Mammary epithelial cell (primary cell): ENCODE measurements at regions of chr20 and their contacts with region 1.

Region 1: DNA sequence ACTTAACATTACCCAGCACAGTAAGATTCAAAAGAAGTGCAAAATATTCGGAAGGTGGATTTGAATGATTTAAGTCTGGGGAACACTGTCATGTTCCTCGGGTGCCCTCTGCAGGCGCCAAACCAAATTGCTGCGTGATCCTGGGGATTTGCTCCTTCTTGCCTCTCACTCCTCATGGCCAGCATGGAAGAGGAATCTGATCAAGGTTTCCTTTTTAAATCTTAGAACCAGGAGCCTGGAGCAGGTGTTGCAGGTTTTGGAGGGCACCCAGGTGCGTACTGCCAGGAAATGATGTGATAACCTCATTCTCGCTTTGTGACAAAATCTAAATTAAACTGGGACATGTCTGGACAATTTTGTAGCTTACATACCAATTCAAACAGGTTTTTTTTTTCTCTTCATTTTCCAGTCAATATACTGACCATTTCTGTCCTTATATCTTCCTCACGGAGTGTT is 8.1 kb upstream of the PFDN4 start:
- DNase-seq: peak; percentile 70
- H3K4me3 ChIP-seq: no peak overlapping the region
- H3K27ac ChIP-seq: no peak overlapping the region
- H3K4me1 ChIP-seq: peaks cover 17% of the 10 kb centered on the region
- H3K27me3 ChIP-seq: no peaks in the 10 kb centered on the region
- CTCF ChIP-seq: peak; percentile 92 to 97

Region 2: DNA sequence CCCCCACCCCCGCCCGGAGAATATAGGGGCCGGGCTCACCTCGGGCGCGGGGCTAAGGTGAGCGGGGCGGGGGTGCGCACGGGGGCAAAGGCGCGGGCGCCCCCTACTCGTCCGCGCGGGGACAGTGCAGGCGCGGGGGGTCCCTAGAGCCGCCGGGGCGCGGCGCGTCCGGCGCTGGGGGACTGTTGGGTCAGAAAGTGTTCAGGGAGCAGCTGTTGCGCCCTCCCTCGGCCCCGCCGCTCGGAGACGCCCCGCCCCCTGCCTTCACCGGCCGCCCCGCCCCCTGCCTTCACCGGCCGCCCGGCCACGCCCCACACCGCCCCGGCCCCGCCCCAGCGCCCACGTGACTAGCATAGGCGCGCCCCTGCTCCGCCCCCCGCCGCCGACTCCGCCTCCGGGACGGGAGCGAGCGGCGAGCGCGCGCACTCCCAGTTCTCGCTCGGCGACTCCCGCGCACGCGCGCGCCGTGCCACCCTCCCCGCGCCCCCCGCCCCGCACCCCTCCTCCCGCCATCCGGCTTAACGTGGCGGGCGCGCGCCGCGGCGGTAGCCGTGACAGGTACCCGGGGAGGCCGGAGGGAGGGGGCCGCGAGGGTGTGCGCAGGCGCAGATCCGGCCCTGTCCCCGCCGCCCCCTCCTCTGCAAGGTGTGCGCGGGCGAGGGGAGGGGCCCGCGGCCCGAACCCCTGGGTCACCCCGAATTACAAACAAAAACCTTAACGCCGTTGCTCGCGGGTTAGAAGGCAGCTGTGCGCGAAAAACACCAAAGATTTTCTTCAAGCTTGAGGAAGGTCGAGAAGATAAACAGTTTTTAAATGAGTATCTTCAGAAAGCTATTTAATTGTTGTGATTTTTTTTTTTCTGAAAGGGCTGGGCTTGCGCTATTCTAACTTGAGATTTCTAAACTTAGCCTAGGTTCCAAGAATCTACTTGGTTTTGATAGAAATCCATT is 605.4 kb before region 1 on chr20:
- CTCF ChIA-PET with region 1: no interaction called
- dilution Hi-C with region 1: no loop called
- in situ Hi-C with region 1: loop called in 1 of 2 experiments (anchors 25 kb)
- intact Hi-C with region 1: no loop called
- DNase-seq: peak; percentile 85
- H3K4me3 ChIP-seq: peak overlapping the region; percentile 67 to 85 (median 83)
- H3K27ac ChIP-seq: peak overlapping the region; percentile 81
- H3K4me1 ChIP-seq: peaks cover 28% of the 10 kb centered on the region
- H3K27me3 ChIP-seq: no peaks in the 10 kb centered on the region
- CTCF ChIP-seq: no peak

Region 3: GRCh38 chr20:54093423-54094267 is 106.1 kb before region 1 on chr20:
- CTCF ChIA-PET with region 1: interaction called, 7 read pairs
- dilution Hi-C with region 1: no loop called
- in situ Hi-C with region 1: loop called (anchors 5 kb)
- intact Hi-C with region 1: loop called (anchors 1 kb)
- DNase-seq: no peak
- H3K4me3 ChIP-seq: no peak overlapping the region
- H3K27ac ChIP-seq: no peak overlapping the region
- H3K4me1 ChIP-seq: no peaks in the 10 kb centered on the region
- H3K27me3 ChIP-seq: no peaks in the 10 kb centered on the region
- CTCF ChIP-seq: no peak

Region 4: GRCh38 chr20:54103067-54103761 is 96.5 kb before region 1 on chr20:
- CTCF ChIA-PET with region 1: no interaction called
- dilution Hi-C with region 1: loop called (anchors 5 kb)
- in situ Hi-C with region 1: loop called (anchors 5 kb)
- intact Hi-C with region 1: no loop called
- DNase-seq: no peak
- H3K4me3 ChIP-seq: no peak overlapping the region
- H3K27ac ChIP-seq: no peak overlapping the region
- H3K4me1 ChIP-seq: peaks cover 32% of the 10 kb centered on the region
- H3K27me3 ChIP-seq: no peaks in the 10 kb centered on the region
- CTCF ChIP-seq: peak; percentile 64 to 74

Region 5: GRCh38 chr20:54132612-54133433 is 66.9 kb before region 1 on chr20:
- CTCF ChIA-PET with region 1: no interaction called
- dilution Hi-C with region 1: loop called (anchors 5 kb)
- in situ Hi-C with region 1: no loop called
- intact Hi-C with region 1: loop called (anchors 2 kb)
- DNase-seq: peak; percentile 100
- H3K4me3 ChIP-seq: no peak overlapping the region
- H3K27ac ChIP-seq: peak overlapping the region; percentile 98
- H3K4me1 ChIP-seq: peaks cover 38% of the 10 kb centered on the region
- H3K27me3 ChIP-seq: no peaks in the 10 kb centered on the region
- CTCF ChIP-seq: no peak

Region 6: GRCh38 chr20:54257071-54257840 is 57.5 kb after region 1 on chr20:
- CTCF ChIA-PET with region 1: interaction called, 4 read pairs
- dilution Hi-C with region 1: loop called (anchors 5 kb)
- in situ Hi-C with region 1: no loop called
- intact Hi-C with region 1: no loop called
- DNase-seq: peak; percentile 92
- H3K4me3 ChIP-seq: no peak overlapping the region
- H3K27ac ChIP-seq: peak overlapping the region; percentile 44
- H3K4me1 ChIP-seq: peaks cover 29% of the 10 kb centered on the region
- H3K27me3 ChIP-seq: no peaks in the 10 kb centered on the region
- CTCF ChIP-seq: no peak

Region 7: DNA sequence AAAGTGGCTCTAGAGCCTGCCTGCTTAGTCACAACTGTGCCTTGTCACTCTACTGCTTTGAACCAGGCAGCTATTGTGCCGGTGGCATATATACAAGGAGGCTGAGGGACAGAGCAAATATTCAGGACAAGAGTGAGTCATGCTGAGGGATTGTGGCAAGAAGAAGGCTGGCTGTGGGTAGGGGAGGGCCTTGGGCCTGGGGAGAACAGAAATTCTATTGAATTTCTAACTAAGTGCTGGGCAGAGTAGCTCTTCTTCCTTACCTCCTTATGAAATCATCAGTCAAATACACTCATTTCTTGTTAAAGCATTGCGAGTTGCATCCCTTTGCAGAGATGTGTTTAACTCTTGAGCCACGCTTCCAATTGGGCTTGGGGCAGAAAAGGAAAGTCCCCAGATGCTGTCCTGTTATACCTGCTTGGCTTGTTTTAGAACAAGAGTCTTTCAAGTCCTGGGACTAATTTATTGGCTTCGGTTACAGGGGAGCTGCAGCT is 67.8 kb after region 1 on chr20:
- CTCF ChIA-PET with region 1: no interaction called
- dilution Hi-C with region 1: no loop called
- in situ Hi-C with region 1: no loop called
- intact Hi-C with region 1: no loop called
- DNase-seq: peak; percentile 61
- H3K4me3 ChIP-seq: no peak overlapping the region
- H3K27ac ChIP-seq: no peak overlapping the region
- H3K4me1 ChIP-seq: peaks cover 12% of the 10 kb centered on the region
- H3K27me3 ChIP-seq: no peaks in the 10 kb centered on the region
- CTCF ChIP-seq: no peak

Region 8: GRCh38 chr20:54649511-54649962 is 449.8 kb after region 1 on chr20:
- CTCF ChIA-PET with region 1: no interaction called
- dilution Hi-C with region 1: no loop called
- in situ Hi-C with region 1: no loop called
- intact Hi-C with region 1: loop called (anchors 5 kb)
- DNase-seq: peak; percentile 69
- H3K4me3 ChIP-seq: no peak overlapping the region
- H3K27ac ChIP-seq: no peak overlapping the region
- H3K4me1 ChIP-seq: no peaks in the 10 kb centered on the region
- H3K27me3 ChIP-seq: no peaks in the 10 kb centered on the region
- CTCF ChIP-seq: peak; percentile 76 to 80